ENCODE measurements at regions of chr3 and their contacts with region 1.

Region 1: DNA sequence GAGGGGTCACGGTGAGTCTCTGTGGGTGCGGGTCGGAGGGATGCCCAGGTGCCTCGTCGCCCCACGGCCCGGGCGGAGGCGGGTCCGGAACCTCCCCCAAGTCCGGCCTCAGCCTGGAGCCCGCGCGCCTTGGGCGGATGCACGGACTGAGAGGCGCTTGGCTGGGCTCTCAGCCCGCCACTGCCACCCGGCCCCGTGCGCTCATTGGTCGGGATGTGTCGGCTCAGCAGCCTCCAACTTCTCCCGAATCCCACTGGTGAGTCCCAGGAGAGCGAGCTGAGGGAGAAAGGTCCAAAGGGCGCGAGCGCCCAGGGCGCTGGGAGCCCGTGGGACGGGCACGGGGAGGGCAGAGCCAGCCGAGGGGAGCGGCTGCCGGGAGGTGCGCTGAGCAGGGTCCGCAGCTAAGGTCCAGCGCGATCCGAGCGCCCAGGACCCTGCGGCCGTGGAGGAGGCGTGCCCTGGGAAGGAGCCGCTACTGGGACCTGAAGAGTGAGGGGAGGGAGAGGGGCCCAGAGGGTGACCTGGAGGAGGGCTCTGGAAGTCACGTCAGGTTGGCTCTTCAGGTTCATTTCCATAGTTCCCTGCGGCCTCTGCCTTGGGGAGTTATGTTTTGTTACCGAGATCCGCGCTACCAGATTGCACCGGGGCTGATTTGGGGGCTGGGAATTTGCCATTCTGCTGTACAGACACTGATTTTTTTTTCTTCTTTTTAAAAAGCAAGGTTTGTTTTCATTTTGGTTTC is at the start of gene MME:
- DNase-seq: no peak
- H3K4me3 ChIP-seq: peak within 1 kb of the TSS; percentile 96
- H3K27me3 ChIP-seq: no peaks in the 10 kb centered on the region
- CTCF ChIP-seq: no peak
- polyA plus RNA-seq, gene MME: 208 and 273 TPM in 2 replicates

Region 2: DNA sequence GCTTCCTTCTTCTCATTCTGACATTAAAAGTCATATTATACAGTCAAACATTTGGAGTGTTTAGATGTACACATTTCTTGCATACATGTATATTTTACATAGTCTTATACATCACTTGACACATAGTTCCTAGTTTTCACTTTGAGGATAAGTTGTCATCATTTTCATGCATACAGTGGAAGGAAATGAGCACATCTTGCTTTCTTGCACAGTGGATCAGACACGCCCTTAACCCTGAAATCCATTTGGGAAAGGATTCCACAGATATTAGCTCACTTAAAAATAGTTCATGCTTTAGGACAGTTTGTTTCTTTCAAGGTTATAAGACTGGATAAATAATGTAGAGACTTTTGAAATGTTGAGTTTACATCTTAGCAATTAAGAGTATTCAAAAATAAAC is 148.4 kb before region 1 on chr3:
- CTCF ChIA-PET with region 1: no interaction called
- POLR2A ChIA-PET with region 1: interaction called, 18 read pairs
- DNase-seq: peak; percentile 69
- H3K4me3 ChIP-seq: no peak overlapping the region
- H3K27me3 ChIP-seq: no peaks in the 10 kb centered on the region
- CTCF ChIP-seq: no peak

Region 3: DNA sequence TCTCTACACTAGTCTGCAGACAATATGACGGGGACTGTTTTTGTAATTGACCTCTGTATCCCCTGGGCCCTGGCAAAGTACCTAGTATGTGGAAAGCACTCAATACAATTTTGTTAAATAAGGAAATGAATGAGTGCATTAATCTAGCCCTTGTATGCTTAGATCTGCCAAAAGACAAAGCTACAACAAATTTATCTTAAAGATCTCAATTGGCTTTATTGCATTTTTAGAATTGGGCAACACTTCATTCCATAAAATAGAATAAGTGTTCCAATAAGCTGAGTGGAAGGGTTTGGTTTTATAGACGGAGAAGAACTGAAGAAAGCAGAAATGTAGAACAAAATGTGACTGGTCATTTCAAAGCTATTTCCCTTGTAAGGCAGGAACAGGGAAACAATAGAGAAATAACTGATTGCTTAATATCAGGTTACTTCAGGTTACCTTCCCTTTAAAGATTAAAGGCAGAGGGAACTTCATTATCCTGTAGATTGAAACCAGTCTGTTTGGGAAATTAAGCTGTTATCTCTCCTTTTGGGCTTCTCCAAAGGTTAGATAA is 108.1 kb before region 1 on chr3:
- CTCF ChIA-PET with region 1: interaction called, 15 read pairs
- POLR2A ChIA-PET with region 1: interaction called, 5 read pairs
- DNase-seq: peak; percentile 89
- H3K4me3 ChIP-seq: peak overlapping the region; percentile 13
- H3K27me3 ChIP-seq: no peaks in the 10 kb centered on the region
- CTCF ChIP-seq: no peak

Region 4: GRCh38 chr3:155001273-155002010 is 78.5 kb before region 1 on chr3:
- CTCF ChIA-PET with region 1: no interaction called
- POLR2A ChIA-PET with region 1: no interaction called
- DNase-seq: no peak
- H3K4me3 ChIP-seq: no peak overlapping the region
- H3K27me3 ChIP-seq: no peaks in the 10 kb centered on the region
- CTCF ChIP-seq: no peak

Region 5: DNA sequence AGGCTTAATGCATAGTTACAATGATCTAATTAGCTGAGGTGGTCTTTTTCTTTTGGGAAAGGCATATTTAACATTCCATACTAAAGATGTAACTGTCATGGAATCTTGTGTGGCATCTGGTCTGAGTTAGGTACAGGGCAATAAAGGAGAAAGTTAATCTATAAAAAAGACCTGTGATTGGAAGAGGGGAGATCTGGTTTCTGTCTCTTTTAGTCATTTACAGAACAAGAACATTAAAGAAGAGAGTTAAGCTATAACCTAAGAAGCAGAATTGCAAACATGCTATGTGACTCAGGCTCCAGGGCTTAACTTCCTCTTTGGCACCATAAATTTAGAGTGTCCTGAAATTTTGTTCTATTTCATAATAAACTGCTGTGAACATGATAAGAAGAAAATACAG is 47.0 kb before region 1 on chr3:
- CTCF ChIA-PET with region 1: interaction called, 3 read pairs
- POLR2A ChIA-PET with region 1: interaction called, 12 read pairs
- DNase-seq: peak; percentile 41
- H3K4me3 ChIP-seq: no peak overlapping the region
- H3K27me3 ChIP-seq: no peaks in the 10 kb centered on the region
- CTCF ChIP-seq: no peak

Region 6: GRCh38 chr3:155323063-155323666 is 243.2 kb after region 1 on chr3:
- CTCF ChIA-PET with region 1: interaction called, 12 read pairs
- POLR2A ChIA-PET with region 1: no interaction called
- DNase-seq: peak; percentile 46
- H3K4me3 ChIP-seq: no peak overlapping the region
- H3K27me3 ChIP-seq: no peaks in the 10 kb centered on the region
- CTCF ChIP-seq: peak; percentile 76